Activated CD8-positive, alpha-beta T cell treated with anti-CD3 and anti-CD28 coated beads, Interleukin-2, amount 10 ng/mL, durations not matched to agents 7 days and 5 days (primary cell): ENCODE measurements at regions of chr16 and their contacts with region 1.

Region 1: DNA sequence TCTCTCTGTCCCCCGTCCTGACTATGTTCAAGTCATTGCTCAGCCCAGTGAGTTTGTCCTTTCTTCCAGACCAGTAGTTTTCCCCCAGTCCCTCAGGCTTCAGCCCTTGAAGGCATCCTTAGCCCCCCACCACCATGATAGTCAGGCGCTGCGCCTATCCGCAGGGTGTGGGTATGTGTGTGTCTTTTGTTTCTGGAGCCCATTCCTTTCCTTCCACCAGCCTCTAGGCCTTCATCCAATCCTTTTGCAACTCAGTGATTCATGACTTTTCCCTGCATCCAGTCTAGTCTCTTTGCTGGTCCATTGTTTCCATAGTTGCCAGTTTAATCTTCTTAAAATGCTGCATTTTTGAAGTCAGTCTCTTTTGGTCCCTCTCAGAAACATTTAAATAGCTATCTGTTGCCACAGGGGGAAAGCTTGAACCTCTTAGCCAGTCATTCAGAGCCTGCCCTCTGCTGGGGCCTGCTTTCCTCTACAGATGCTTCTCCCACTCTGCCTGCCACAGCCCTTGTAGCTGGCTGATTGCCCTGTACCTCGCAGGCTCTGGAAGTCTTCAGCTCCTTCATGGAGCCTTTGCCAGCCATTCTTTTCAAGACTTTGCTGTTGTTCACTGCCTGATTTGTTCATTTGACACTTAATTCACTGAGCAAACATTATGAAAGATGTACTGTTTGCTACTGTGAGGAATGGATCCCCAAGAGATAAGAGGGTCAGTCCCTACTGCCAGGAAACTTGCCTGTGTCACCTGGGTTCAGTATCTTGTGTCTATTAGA is 55.9 kb upstream of the ADCY7 start:
- DNase-seq: peak; percentile 80
- ATAC-seq: peak; percentile 95
- H3K4me3 Mint-ChIP-seq: no peak overlapping the region
- H3K27ac Mint-ChIP-seq: peak overlapping the region; percentile 41
- H3K4me1 Mint-ChIP-seq: peaks cover 32% of the 10 kb centered on the region
- H3K27me3 Mint-ChIP-seq: no peaks in the 10 kb centered on the region

Region 2: GRCh38 chr16:50065624-50066481 is 144.6 kb before region 1 on chr16 and contains the start of gene HEATR3:
- CTCF ChIA-PET with region 1: interaction called, 186 read pairs
- POLR2A ChIA-PET with region 1: interaction called, 9 read pairs
- DNase-seq: peak; percentile 95
- ATAC-seq: peak; percentile 92
- H3K4me3 Mint-ChIP-seq: peak within 1 kb of the TSS; percentile 90
- H3K27ac Mint-ChIP-seq: peak within 1 kb of the TSS; percentile 94
- H3K4me1 Mint-ChIP-seq: peaks cover 39% of the 10 kb centered on the region
- H3K27me3 Mint-ChIP-seq: peaks cover 3% of the 10 kb centered on the region
- total RNA-seq, gene HEATR3: 29.7 to 31.7 TPM

Region 3: DNA sequence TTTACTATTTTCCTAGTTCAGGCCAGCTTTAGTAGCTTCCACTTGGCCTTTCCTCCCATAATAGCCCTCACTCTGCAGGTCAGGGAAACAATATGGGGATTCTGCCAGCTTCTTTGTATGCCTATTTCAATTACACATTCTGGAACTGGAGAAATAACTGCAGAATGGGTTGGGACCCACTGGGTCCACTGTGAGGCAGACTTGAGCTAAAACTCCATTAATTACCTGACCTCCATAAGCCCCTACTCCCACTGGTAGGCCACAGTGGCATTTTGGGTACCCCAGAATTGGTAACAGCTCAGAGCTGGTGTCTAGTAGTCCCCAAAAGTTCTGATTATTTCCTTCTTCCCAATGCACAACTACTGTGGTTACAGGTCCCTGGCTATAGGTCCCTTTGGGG is 74.1 kb before region 1 on chr16:
- CTCF ChIA-PET with region 1: interaction called, 36 read pairs
- POLR2A ChIA-PET with region 1: no interaction called
- DNase-seq: no peak
- ATAC-seq: no peak
- H3K4me3 Mint-ChIP-seq: no peak overlapping the region
- H3K27ac Mint-ChIP-seq: no peak overlapping the region
- H3K4me1 Mint-ChIP-seq: no peaks in the 10 kb centered on the region
- H3K27me3 Mint-ChIP-seq: peaks cover 5% of the 10 kb centered on the region

Region 4: GRCh38 chr16:50166511-50167500 is 43.6 kb before region 1 on chr16:
- CTCF ChIA-PET with region 1: interaction called, 20 read pairs
- POLR2A ChIA-PET with region 1: no interaction called
- DNase-seq: no peak
- ATAC-seq: peak; percentile 62
- H3K4me3 Mint-ChIP-seq: no peak overlapping the region
- H3K27ac Mint-ChIP-seq: peak overlapping the region; percentile 53
- H3K4me1 Mint-ChIP-seq: peaks cover 49% of the 10 kb centered on the region
- H3K27me3 Mint-ChIP-seq: no peaks in the 10 kb centered on the region

Region 5: DNA sequence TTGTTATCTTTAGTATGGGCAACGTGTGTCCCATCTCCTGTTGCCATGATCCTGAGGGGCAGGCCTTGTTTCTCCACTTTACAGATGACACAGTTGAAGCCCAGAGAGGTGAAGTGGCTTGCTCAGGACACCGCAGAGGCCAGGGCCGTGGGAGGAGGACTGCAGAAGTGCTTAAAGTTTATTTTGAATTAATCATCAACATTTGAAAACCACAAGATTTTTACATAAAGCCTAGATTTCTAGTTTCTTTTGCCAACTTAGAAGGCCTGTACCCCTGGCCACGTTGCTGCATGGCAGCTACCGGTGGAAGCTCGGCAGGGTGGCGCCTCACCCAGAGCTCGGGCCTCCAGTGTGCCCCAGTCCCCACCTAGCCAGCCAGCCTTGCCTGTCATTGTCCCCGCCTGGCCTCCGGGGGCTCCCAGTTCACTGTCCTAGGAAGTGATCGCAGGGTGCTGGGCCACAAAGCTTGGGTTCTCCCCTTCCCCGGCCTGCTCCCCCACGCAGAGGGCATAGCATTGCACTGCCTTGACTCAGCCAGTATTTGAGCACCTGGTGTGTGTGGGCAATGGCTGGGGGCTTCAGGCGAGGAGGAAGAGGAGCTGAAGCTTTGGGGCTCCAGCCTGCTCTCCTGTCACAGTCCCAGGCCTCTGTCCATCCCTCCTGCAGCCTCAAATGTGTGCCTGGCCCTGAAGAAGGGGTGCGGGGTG is 41.1 kb after region 1 on chr16:
- CTCF ChIA-PET with region 1: interaction called, 10 read pairs
- POLR2A ChIA-PET with region 1: no interaction called
- DNase-seq: no peak
- ATAC-seq: no peak
- H3K4me3 Mint-ChIP-seq: no peak overlapping the region
- H3K27ac Mint-ChIP-seq: no peak overlapping the region
- H3K4me1 Mint-ChIP-seq: peaks cover 20% of the 10 kb centered on the region
- H3K27me3 Mint-ChIP-seq: peaks cover 4% of the 10 kb centered on the region

Region 6: GRCh38 chr16:50326949-50327402 is 116.5 kb after region 1 on chr16:
- CTCF ChIA-PET with region 1: interaction called, 31 read pairs
- POLR2A ChIA-PET with region 1: interaction called, 3 read pairs
- DNase-seq: peak; percentile 88
- ATAC-seq: peak; percentile 96
- H3K4me3 Mint-ChIP-seq: no peak overlapping the region
- H3K27ac Mint-ChIP-seq: peak overlapping the region; percentile 78
- H3K4me1 Mint-ChIP-seq: peaks cover 62% of the 10 kb centered on the region
- H3K27me3 Mint-ChIP-seq: no peaks in the 10 kb centered on the region